H1 (cell line): ENCODE measurements at regions of chr2 and their contacts with region 1.

Region 1: GRCh38 chr2:9984217-9984739 is 32.8 kb downstream of the GRHL1 start:
- DNase-seq: no peak
- H3K4me3 ChIP-seq: no peak overlapping the region
- H3K27ac ChIP-seq: no peak overlapping the region
- H3K4me1 ChIP-seq: no peaks in the 10 kb centered on the region
- H3K27me3 ChIP-seq: no peaks in the 10 kb centered on the region; a peak in 1 of 7 replicates
- CTCF ChIP-seq: peak in 2 of 3 experiments; percentile 45 to 59; a peak in 3 of 4 replicates
- EP300 ChIP-seq: no peak
- POLR2A ChIP-seq: no peak
- RAD21 ChIP-seq: peak; percentile 47 to 51

Region 2: GRCh38 chr2:9941196-9941995 is 42.9 kb before region 1 on chr2:
- CTCF ChIA-PET with region 1: interaction called, 25 read pairs
- POLR2A ChIA-PET with region 1: no interaction called
- DNase-seq: peak in 1 of 2 experiments; percentile 50
- H3K4me3 ChIP-seq: no peak overlapping the region
- H3K27ac ChIP-seq: no peak overlapping the region
- H3K4me1 ChIP-seq: peaks cover 0 to 4% (median 0%) of the 10 kb centered on the region in 4 experiments; a peak in 2 of 7 replicates
- H3K27me3 ChIP-seq: no peaks in the 10 kb centered on the region; a peak in 1 of 7 replicates
- CTCF ChIP-seq: no peak
- EP300 ChIP-seq: no peak
- POLR2A ChIP-seq: no peak
- RAD21 ChIP-seq: no peak

Region 3: DNA sequence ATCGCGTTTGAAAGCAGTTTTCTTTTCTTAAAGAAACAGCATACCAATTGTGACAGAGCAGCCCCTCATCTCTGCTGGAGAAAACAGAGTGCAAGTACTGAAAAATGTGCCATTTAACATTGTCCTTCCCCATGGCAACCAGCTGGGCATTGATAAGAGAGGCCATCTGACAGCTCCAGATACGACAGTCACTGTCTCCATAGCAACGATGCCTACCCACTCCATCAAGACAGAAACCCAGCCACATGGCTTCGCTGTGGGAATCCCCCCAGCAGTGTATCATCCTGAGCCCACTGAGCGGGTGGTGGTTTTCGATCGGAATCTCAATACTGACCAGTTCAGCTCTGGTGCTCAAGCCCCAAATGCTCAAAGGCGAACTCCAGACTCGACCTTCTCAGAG is 23.3 kb before region 1 on chr2:
- CTCF ChIA-PET with region 1: interaction called, 18 read pairs
- POLR2A ChIA-PET with region 1: no interaction called
- DNase-seq: no peak
- H3K4me3 ChIP-seq: no peak overlapping the region
- H3K27ac ChIP-seq: no peak overlapping the region
- H3K4me1 ChIP-seq: no peaks in the 10 kb centered on the region
- H3K27me3 ChIP-seq: no peaks in the 10 kb centered on the region
- CTCF ChIP-seq: no peak
- EP300 ChIP-seq: no peak
- POLR2A ChIP-seq: no peak
- RAD21 ChIP-seq: no peak

Region 4: GRCh38 chr2:9967053-9967775 is 17.1 kb before region 1 on chr2:
- CTCF ChIA-PET with region 1: interaction called, 61 read pairs
- POLR2A ChIA-PET with region 1: no interaction called
- DNase-seq: no peak
- H3K4me3 ChIP-seq: no peak overlapping the region
- H3K27ac ChIP-seq: no peak overlapping the region
- H3K4me1 ChIP-seq: no peaks in the 10 kb centered on the region
- H3K27me3 ChIP-seq: no peaks in the 10 kb centered on the region
- CTCF ChIP-seq: no peak
- EP300 ChIP-seq: no peak
- POLR2A ChIP-seq: no peak
- RAD21 ChIP-seq: no peak

Region 5: DNA sequence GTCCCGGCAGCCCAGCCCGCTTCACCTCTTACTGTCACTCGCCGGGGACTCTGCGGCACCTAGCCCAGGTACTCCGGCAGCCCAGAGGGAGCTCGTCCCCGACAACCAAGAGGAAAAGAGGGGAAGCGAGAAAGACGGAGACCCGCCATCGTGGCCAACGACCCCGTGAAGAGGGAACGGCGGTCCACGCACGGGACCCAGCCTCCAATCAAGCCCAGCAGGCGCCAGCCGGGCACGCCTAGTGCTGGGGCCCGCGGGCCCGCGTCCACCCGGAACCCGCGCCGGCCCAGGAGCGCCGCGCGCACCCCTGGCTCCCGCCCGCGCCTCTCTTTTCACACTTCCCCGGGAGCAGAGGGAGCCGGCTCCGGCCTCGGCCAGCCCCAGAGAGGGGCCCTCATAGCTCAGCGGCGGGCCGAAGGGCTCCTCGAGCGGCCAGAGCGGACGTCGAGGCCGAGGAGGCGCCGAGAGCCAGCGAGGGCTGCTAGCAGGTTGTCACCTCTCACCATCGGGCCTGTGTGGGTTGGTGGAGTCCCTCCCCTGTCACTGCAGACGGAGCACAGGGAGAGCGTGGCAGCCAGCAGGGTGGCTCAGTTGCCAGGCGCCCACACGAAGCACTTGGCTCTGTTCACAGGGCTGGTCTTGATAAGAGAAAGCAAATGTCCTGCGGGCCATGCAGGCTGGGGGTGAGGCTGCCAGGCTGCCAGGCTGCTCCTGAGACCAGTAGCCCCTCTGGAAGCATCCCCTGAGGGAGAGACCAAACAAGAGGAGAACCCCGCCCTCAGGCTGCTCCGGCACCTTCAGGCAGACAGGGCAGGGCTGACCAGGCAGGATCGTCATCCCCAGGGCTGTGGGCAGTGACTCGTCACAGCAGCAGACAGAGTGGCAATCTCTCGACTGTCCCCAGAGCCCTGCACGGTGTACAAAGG is 22.2 kb after region 1 on chr2:
- CTCF ChIA-PET with region 1: interaction called, 23 read pairs
- POLR2A ChIA-PET with region 1: no interaction called
- DNase-seq: no peak
- H3K4me3 ChIP-seq: no peak overlapping the region; a peak in 1 of 8 replicates
- H3K27ac ChIP-seq: no peak overlapping the region
- H3K4me1 ChIP-seq: peaks cover 0 to 2% (median under 1%) of the 10 kb centered on the region in 4 experiments; a peak in 1 of 7 replicates
- H3K27me3 ChIP-seq: no peaks in the 10 kb centered on the region
- CTCF ChIP-seq: no peak
- EP300 ChIP-seq: no peak
- POLR2A ChIP-seq: no peak
- RAD21 ChIP-seq: no peak

Region 6: GRCh38 chr2:10019174-10019573 is 34.9 kb after region 1 on chr2:
- CTCF ChIA-PET with region 1: interaction called, 33 read pairs
- POLR2A ChIA-PET with region 1: no interaction called
- DNase-seq: no peak
- H3K4me3 ChIP-seq: no peak overlapping the region
- H3K27ac ChIP-seq: no peak overlapping the region
- H3K4me1 ChIP-seq: no peaks in the 10 kb centered on the region
- H3K27me3 ChIP-seq: no peaks in the 10 kb centered on the region
- CTCF ChIP-seq: no peak
- EP300 ChIP-seq: no peak
- POLR2A ChIP-seq: no peak
- RAD21 ChIP-seq: no peak

Region 7: DNA sequence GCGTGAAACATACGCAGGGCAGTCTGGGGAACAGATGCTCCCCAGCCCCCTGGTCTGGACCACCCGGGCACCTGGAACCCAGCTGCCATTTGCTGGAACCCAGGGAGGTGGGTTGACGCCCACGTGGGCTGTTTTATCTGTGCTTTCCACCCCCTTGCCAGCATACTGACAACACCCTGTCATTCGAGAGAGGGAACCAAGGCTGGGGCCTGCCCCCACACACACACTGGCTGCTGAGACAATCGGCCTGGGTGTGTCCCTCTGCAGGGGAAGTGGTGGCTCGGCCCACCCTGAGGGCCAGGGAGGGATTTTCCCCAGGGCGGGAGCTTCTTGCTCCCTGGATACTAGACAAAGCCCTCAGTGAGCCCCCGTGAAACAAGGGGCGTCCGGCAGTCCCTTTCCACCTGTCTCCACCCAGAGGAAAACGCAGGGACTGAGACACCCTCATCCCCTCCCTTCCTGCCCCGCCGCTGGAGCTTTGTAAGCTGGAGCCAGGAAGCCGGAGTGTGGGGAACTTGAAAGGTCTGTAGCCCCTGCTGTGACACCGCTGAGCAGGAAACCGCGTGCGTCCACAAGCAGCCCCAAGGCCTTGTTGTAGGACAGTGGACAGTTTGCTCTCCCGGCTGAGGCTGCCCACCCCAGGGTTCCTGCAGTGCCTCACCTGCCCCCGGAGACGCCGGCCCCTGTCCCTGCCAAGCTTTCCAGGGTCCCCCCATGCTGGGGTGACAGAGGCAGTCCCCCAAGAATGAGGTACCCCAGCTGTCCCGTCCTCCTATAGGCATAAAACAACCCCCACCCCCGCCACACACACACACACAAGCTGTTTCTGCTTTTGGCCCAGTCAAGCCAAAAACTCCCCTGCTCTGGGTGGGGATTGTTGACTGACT is 45.0 kb after region 1 on chr2:
- CTCF ChIA-PET with region 1: interaction called, 46 read pairs
- POLR2A ChIA-PET with region 1: no interaction called
- DNase-seq: no peak
- H3K4me3 ChIP-seq: no peak overlapping the region
- H3K27ac ChIP-seq: no peak overlapping the region
- H3K4me1 ChIP-seq: peaks cover 0 to 17% (median 7%) of the 10 kb centered on the region in 4 experiments; a peak in 6 of 7 replicates
- H3K27me3 ChIP-seq: no peaks in the 10 kb centered on the region
- CTCF ChIP-seq: no peak; a peak in 1 of 4 replicates
- EP300 ChIP-seq: no peak
- POLR2A ChIP-seq: no peak
- RAD21 ChIP-seq: 0 out of 4 replicates have a peak, but pooled peaks of 1 of the 2 experiments have one; percentile 2

Region 8: GRCh38 chr2:10120158-10120886 is 136.0 kb after region 1 on chr2:
- CTCF ChIA-PET with region 1: no interaction called
- POLR2A ChIA-PET with region 1: no interaction called
- DNase-seq: peak; percentile 84 to 97
- H3K4me3 ChIP-seq: peak overlapping the region; percentile 68 to 96 (median 82)
- H3K27ac ChIP-seq: peak overlapping the region; percentile 86
- H3K4me1 ChIP-seq: peaks cover 1 to 4% (median 4%) of the 10 kb centered on the region in 4 experiments; a peak in 4 of 7 replicates
- H3K27me3 ChIP-seq: no peaks in the 10 kb centered on the region
- CTCF ChIP-seq: no peak
- EP300 ChIP-seq: peak in 1 of 2 experiments; percentile 58; a peak in 1 of 3 replicates
- POLR2A ChIP-seq: peak; percentile 71 to 91
- RAD21 ChIP-seq: no peak

Region 9: DNA sequence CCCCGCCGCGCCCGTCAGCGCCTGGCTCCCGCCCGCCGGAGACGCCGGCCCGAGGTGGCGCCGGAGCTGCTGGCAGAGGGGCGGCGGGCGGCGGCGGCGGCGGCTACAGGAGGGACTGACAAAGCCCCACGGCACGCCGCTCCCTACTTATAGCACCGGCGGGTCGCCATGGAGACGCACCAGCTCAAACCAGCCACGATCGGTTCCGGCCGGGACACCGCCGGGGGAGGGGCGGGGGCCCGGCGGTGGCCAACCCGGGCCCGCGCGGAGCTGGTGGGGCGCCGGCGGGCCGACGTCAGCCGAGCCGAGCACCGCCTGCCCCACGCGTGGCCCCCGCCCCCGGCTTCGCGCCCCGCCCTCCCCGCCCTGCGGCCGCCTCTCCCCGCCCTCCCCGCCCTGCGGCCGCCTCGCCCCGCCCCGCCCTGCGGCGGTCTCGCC is 463.9 kb after region 1 on chr2 and contains the start of gene ODC1:
- CTCF ChIA-PET with region 1: no interaction called
- POLR2A ChIA-PET with region 1: no interaction called
- DNase-seq: no peak
- H3K4me3 ChIP-seq: peak within 1 kb of the TSS; percentile 46 to 76 (median 49)
- H3K27ac ChIP-seq: peak within 1 kb of the TSS; percentile 55; the same call in 1 of the 2 replicates
- H3K4me1 ChIP-seq: peaks cover 2 to 10% (median 4%) of the 10 kb centered on the region in 4 experiments; a peak in 6 of 7 replicates
- H3K27me3 ChIP-seq: peaks cover 0 to 28% (median 12%) of the 10 kb centered on the region in 4 experiments; a peak in 5 of 7 replicates
- CTCF ChIP-seq: no peak
- EP300 ChIP-seq: no peak
- POLR2A ChIP-seq: peak; percentile 7 to 33; a peak in 1 of 3 replicates
- RAD21 ChIP-seq: no peak
- total RNA-seq, gene ODC1: 73.6 and 76.7 TPM in 2 replicates